Activated CD8-positive, alpha-beta T cell treated with anti-CD3 and anti-CD28 coated beads for 36 hours (primary cell): ENCODE measurements at regions of chr6 and their contacts with region 1.

Region 1: GRCh38 chr6:157184202-157185020 is 138.9 kb downstream of the TMEM242 start:
- DNase-seq: peak; percentile 75
- ATAC-seq: peak; percentile 90
- H3K4me3 Mint-ChIP-seq: no peak overlapping the region
- H3K27ac Mint-ChIP-seq: no peak overlapping the region
- H3K4me1 Mint-ChIP-seq: peaks cover 6% of the 10 kb centered on the region
- H3K27me3 Mint-ChIP-seq: no peaks in the 10 kb centered on the region
- CTCF ChIP-seq: peak; percentile 94

Region 2: DNA sequence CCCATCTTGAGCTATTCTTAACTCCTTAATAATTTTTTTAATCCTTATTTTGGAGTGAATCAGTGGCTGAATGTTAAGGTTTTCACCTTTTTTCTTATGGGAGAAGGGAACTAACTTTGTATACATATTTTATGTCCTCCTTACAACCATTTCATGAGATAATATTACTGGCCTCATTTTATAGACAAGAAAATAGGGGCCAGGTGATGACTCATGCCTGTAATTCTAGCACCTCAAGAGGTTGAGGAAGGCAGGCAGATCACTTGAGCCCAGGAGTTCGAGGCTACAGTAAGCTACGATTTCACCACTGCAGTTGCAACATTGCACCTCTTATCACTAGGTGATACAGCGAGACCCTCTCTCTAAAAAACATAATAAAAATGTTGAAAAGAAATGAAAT is 10.2 kb after region 1 on chr6:
- CTCF ChIA-PET with region 1: interaction called, 20 read pairs
- POLR2A ChIA-PET with region 1: interaction called, 3 read pairs
- intact Hi-C with region 1: no loop called
- DNase-seq: no peak
- ATAC-seq: no peak
- H3K4me3 Mint-ChIP-seq: no peak overlapping the region
- H3K27ac Mint-ChIP-seq: no peak overlapping the region
- H3K4me1 Mint-ChIP-seq: peaks cover 5% of the 10 kb centered on the region
- H3K27me3 Mint-ChIP-seq: no peaks in the 10 kb centered on the region
- CTCF ChIP-seq: no peak